ENCODE measurements at regions of chr2 and their contacts with region 1.

Region 1: DNA sequence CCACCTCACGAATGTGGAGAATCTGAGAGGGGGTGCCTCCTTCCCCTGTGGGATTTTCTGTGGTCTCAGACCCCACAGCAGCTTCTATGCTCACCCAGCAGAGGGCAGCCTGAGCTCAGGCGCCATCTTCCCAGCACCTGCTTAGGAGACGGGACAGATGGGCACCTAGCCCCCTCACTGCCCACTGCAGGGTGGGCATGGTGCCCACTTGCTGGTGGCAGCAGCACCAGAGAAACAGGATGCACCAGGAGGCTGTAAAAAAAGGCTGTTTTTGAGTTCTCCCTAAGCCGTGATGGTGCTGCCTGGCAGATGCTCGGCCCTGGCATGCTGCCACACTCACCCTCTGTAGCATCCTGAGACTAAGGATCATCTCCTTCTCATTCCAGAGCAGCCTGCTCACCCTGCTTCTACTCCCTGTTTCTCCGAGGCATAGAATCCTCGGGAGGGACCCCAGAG is 19.1 kb upstream of the SLC20A1 start:
- DNase-seq: peak; percentile 64 to 75
- ATAC-seq: peak; percentile 77 to 85 (median 78)
- H3K4me3 ChIP-seq: no peak overlapping the region
- H3K27ac ChIP-seq: peak overlapping the region; percentile 54
- H3K4me1 ChIP-seq: peaks cover 10% of the 10 kb centered on the region
- H3K27me3 ChIP-seq: peaks cover 0 to 16% (median 6%) of the 10 kb centered on the region in 3 donors
- CTCF ChIP-seq: peak; percentile 74

Region 2: GRCh38 chr2:112674229-112674628 is 47.6 kb after region 1 on chr2:
- intact Hi-C with region 1: no loop called
- DNase-seq: peak; percentile 62 to 75
- ATAC-seq: peak in 3 of 4 donors; percentile 45 to 54 (median 53)
- H3K4me3 ChIP-seq: no peak overlapping the region
- H3K27ac ChIP-seq: no peak overlapping the region
- H3K4me1 ChIP-seq: peaks cover 2% of the 10 kb centered on the region
- H3K27me3 ChIP-seq: no peaks in the 10 kb centered on the region
- CTCF ChIP-seq: no peak

Region 3: GRCh38 chr2:112692496-112692911 is 65.9 kb after region 1 on chr2:
- intact Hi-C with region 1: loop called (anchors 2 to 5 kb)
- DNase-seq: peak in 1 of 2 donors; percentile 27
- ATAC-seq: peak; percentile 23 to 49 (median 30)
- H3K4me3 ChIP-seq: no peak overlapping the region
- H3K27ac ChIP-seq: no peak overlapping the region
- H3K4me1 ChIP-seq: no peaks in the 10 kb centered on the region
- H3K27me3 ChIP-seq: no peaks in the 10 kb centered on the region
- CTCF ChIP-seq: no peak

Region 4: GRCh38 chr2:112726497-112727190 is 100.0 kb after region 1 on chr2:
- intact Hi-C with region 1: loop called (anchors 2 kb)
- DNase-seq: peak; percentile 89 to 92
- ATAC-seq: peak; percentile 91 to 99 (median 92)
- H3K4me3 ChIP-seq: no peak overlapping the region
- H3K27ac ChIP-seq: no peak overlapping the region
- H3K4me1 ChIP-seq: no peaks in the 10 kb centered on the region
- H3K27me3 ChIP-seq: no peaks in the 10 kb centered on the region
- CTCF ChIP-seq: peak; percentile 92

Region 5: GRCh38 chr2:112757265-112757664 is 130.6 kb after region 1 on chr2:
- intact Hi-C with region 1: no loop called
- DNase-seq: no peak
- ATAC-seq: no peak
- H3K4me3 ChIP-seq: no peak overlapping the region
- H3K27ac ChIP-seq: no peak overlapping the region
- H3K4me1 ChIP-seq: no peaks in the 10 kb centered on the region
- H3K27me3 ChIP-seq: no peaks in the 10 kb centered on the region
- CTCF ChIP-seq: no peak